Heart right ventricle (tissue), 16 donors: ENCODE measurements at regions of chr20 and their contacts with region 1.

Region 1: GRCh38 chr20:5933802-5934436 is 16.4 kb downstream of the TRMT6 start:
- DNase-seq: peak in 1 of 2 donors; percentile 7
- ATAC-seq: peak in 4 of 8 donors; percentile 51 to 70 (median 66)
- H3K4me3 ChIP-seq: no peak overlapping the region
- H3K27ac ChIP-seq: no peak overlapping the region
- H3K4me1 ChIP-seq: no peaks in the 10 kb centered on the region
- H3K27me3 ChIP-seq: peaks cover 0 to 7% (median 0%) of the 10 kb centered on the region in 7 donors
- CTCF ChIP-seq: peak in 8 of 9 donors; percentile 12 to 51 (median 30)

Region 2: GRCh38 chr20:5529331-5530148 is 404.4 kb before region 1 on chr20:
- intact Hi-C with region 1: loop called in 3 of 10 experiments (anchors 5 to 10 kb)
- DNase-seq: peak; percentile 79 to 83
- ATAC-seq: peak; percentile 67 to 95 (median 90)
- H3K4me3 ChIP-seq: peak overlapping the region in 3 of 10 donors; percentile 8 to 31 (median 15)
- H3K27ac ChIP-seq: no peak overlapping the region
- H3K4me1 ChIP-seq: peaks cover 0 to 32% (median 9%) of the 10 kb centered on the region in 9 donors
- H3K27me3 ChIP-seq: no peaks in the 10 kb centered on the region
- CTCF ChIP-seq: peak; percentile 36 to 88 (median 75)

Region 3: GRCh38 chr20:5557123-5557522 is 376.8 kb before region 1 on chr20:
- intact Hi-C with region 1: loop called in 2 of 10 experiments (anchors 10 kb)
- DNase-seq: peak; percentile 23 to 41
- ATAC-seq: peak in 6 of 8 donors; percentile 56 to 78 (median 68)
- H3K4me3 ChIP-seq: no peak overlapping the region
- H3K27ac ChIP-seq: no peak overlapping the region
- H3K4me1 ChIP-seq: no peaks in the 10 kb centered on the region
- H3K27me3 ChIP-seq: no peaks in the 10 kb centered on the region
- CTCF ChIP-seq: peak in 8 of 9 donors; percentile 12 to 67 (median 59)

Region 4: GRCh38 chr20:5569021-5569420 is 364.9 kb before region 1 on chr20:
- intact Hi-C with region 1: loop called in 1 of 10 experiments (anchors 10 kb)
- DNase-seq: peak in 1 of 2 donors; percentile 44
- ATAC-seq: peak in 4 of 8 donors; percentile 58 to 67 (median 64)
- H3K4me3 ChIP-seq: no peak overlapping the region
- H3K27ac ChIP-seq: peak overlapping the region in 1 of 10 donors; percentile 72
- H3K4me1 ChIP-seq: peaks cover 0 to 40% (median 0%) of the 10 kb centered on the region in 9 donors
- H3K27me3 ChIP-seq: no peaks in the 10 kb centered on the region
- CTCF ChIP-seq: peak; percentile 17 to 67 (median 51)

Region 5: GRCh38 chr20:5596401-5597193 is 337.3 kb before region 1 on chr20:
- intact Hi-C with region 1: no loop called
- DNase-seq: no peak
- ATAC-seq: no peak
- H3K4me3 ChIP-seq: no peak overlapping the region
- H3K27ac ChIP-seq: no peak overlapping the region
- H3K4me1 ChIP-seq: peaks cover 0 to 27% (median 9%) of the 10 kb centered on the region in 9 donors
- H3K27me3 ChIP-seq: no peaks in the 10 kb centered on the region
- CTCF ChIP-seq: no peak

Region 6: GRCh38 chr20:5797843-5798462 is 136.0 kb before region 1 on chr20:
- intact Hi-C with region 1: loop called in 2 of 10 experiments (anchors 10 kb)
- DNase-seq: peak in 1 of 2 donors; percentile 28
- ATAC-seq: peak in 1 of 8 donors; percentile 29
- H3K4me3 ChIP-seq: no peak overlapping the region
- H3K27ac ChIP-seq: no peak overlapping the region
- H3K4me1 ChIP-seq: no peaks in the 10 kb centered on the region
- H3K27me3 ChIP-seq: no peaks in the 10 kb centered on the region
- CTCF ChIP-seq: no peak

Region 7: GRCh38 chr20:5806457-5807263 is 127.3 kb before region 1 on chr20:
- intact Hi-C with region 1: loop called in 5 of 10 experiments (anchors 5 to 10 kb)
- DNase-seq: no peak
- ATAC-seq: peak in 7 of 8 donors; percentile 33 to 83 (median 56)
- H3K4me3 ChIP-seq: no peak overlapping the region
- H3K27ac ChIP-seq: no peak overlapping the region
- H3K4me1 ChIP-seq: peaks cover 0 to 23% (median 15%) of the 10 kb centered on the region in 9 donors
- H3K27me3 ChIP-seq: no peaks in the 10 kb centered on the region
- CTCF ChIP-seq: peak in 6 of 9 donors; percentile 14 to 47 (median 29)

Region 8: DNA sequence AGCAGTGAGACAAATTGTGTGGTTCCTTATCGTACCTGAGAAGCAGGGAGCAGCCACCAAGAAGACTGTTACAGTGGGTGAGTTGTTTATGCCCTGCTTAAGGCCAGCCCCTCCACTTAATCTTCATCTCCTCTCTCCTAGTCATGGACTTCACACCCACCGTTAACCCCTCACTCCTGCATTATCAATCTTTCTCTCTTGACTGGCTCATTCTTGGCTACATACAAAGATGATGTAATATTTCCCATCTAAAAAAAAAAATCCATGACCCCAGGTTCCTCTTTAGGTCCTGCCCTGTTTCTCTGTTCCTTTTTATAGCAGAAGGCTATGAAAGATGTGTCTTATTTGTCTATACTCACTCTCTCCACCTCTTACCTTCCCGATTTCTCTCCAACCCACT is 111.3 kb before region 1 on chr20:
- intact Hi-C with region 1: loop called in 5 of 10 experiments (anchors 5 to 10 kb)
- DNase-seq: no peak
- ATAC-seq: peak in 1 of 8 donors; percentile 19
- H3K4me3 ChIP-seq: no peak overlapping the region
- H3K27ac ChIP-seq: no peak overlapping the region
- H3K4me1 ChIP-seq: peaks cover 0 to 26% (median 14%) of the 10 kb centered on the region in 9 donors
- H3K27me3 ChIP-seq: no peaks in the 10 kb centered on the region
- CTCF ChIP-seq: no peak